CD8-positive, alpha-beta T cell (primary cell): ENCODE measurements at regions of chr17 and their contacts with region 1.

Region 1: GRCh38 chr17:35063514-35064223 is at the start of gene RFFL:
- DNase-seq: peak; percentile 62 to 97 (median 85)
- ATAC-seq: peak; percentile 98
- H3K4me3 ChIP-seq: peak within 1 kb of the TSS in 1 of 2 experiments; percentile 38
- H3K4me3 Mint-ChIP-seq: peak within 1 kb of the TSS; percentile 85
- H3K27ac ChIP-seq: peak within 1 kb of the TSS; percentile 63 to 73
- H3K27ac Mint-ChIP-seq: peak within 1 kb of the TSS; percentile 97
- H3K4me1 ChIP-seq: peaks cover 35% of the 10 kb centered on the region
- H3K4me1 Mint-ChIP-seq: peaks cover 66% of the 10 kb centered on the region
- H3K27me3 ChIP-seq: no peaks in the 10 kb centered on the region
- H3K27me3 Mint-ChIP-seq: no peaks in the 10 kb centered on the region
- CTCF ChIP-seq: no peak
- total RNA-seq, gene RFFL: 55.2 to 64.4 TPM

Region 2: GRCh38 chr17:34961093-34961911 is 102.4 kb before region 1 on chr17 and contains the starts of genes CCT6B and ZNF830:
- CTCF ChIA-PET with region 1: interaction called, 4 read pairs
- POLR2A ChIA-PET with region 1: no interaction called
- intact Hi-C with region 1: loop called in 1 of 2 experiments (anchors 1 kb)
- DNase-seq: peak; percentile 75 to 97 (median 92)
- ATAC-seq: peak; percentile 88
- H3K4me3 ChIP-seq: peak within 1 kb of the TSS; percentile 72 to 78
- H3K4me3 Mint-ChIP-seq: peak within 1 kb of the TSS; percentile 100
- H3K27ac ChIP-seq: peak within 1 kb of the TSS; percentile 84 to 99
- H3K27ac Mint-ChIP-seq: peak within 1 kb of the TSS; percentile 99
- H3K4me1 ChIP-seq: peaks cover 22% of the 10 kb centered on the region
- H3K4me1 Mint-ChIP-seq: peaks cover 40% of the 10 kb centered on the region
- H3K27me3 ChIP-seq: no peaks in the 10 kb centered on the region
- H3K27me3 Mint-ChIP-seq: peaks cover 6% of the 10 kb centered on the region
- CTCF ChIP-seq: no peak
- total RNA-seq, gene CCT6B: 4.0 to 5.9 TPM
- total RNA-seq, gene ZNF830: 43.6 to 45.0 TPM

Region 3: GRCh38 chr17:34990921-34991365 is 72.7 kb before region 1 on chr17:
- CTCF ChIA-PET with region 1: interaction called, 73 read pairs
- POLR2A ChIA-PET with region 1: interaction called, 3 read pairs
- intact Hi-C with region 1: no loop called
- DNase-seq: no peak
- ATAC-seq: no peak
- H3K4me3 ChIP-seq: no peak overlapping the region
- H3K4me3 Mint-ChIP-seq: no peak overlapping the region
- H3K27ac ChIP-seq: no peak overlapping the region
- H3K27ac Mint-ChIP-seq: no peak overlapping the region
- H3K4me1 ChIP-seq: no peaks in the 10 kb centered on the region
- H3K4me1 Mint-ChIP-seq: peaks cover 5% of the 10 kb centered on the region
- H3K27me3 ChIP-seq: no peaks in the 10 kb centered on the region
- H3K27me3 Mint-ChIP-seq: no peaks in the 10 kb centered on the region
- CTCF ChIP-seq: no peak

Region 4: DNA sequence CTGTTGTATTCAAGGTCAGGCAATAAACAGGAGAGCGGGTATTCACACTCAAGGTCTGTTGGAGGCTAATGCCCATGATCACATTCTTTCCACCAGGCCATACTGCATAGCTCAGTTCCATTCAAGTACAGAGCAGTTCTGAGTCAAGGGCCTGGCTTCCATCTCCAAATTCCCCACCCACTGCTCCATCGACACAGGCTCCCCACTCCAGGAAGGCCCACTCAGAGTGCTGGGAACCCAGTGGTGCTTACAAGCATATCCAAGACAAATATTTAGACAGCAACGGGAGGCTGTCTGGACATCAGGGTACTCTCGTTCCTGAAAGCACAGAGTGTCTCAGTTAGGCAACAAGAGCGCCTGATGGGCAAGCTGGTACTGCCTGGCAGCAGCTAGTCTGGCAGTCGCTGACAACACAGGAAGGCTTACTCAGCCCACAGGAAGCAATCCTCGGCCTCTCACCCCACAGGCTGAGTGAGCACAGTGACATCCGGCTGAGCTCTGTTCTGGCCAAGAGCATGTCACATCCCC is 41.1 kb before region 1 on chr17:
- CTCF ChIA-PET with region 1: interaction called, 8 read pairs
- POLR2A ChIA-PET with region 1: interaction called, 22 read pairs
- intact Hi-C with region 1: loop called (anchors 1 kb)
- DNase-seq: peak; percentile 43 to 88 (median 79)
- ATAC-seq: peak; percentile 96
- H3K4me3 ChIP-seq: no peak overlapping the region
- H3K4me3 Mint-ChIP-seq: peak overlapping the region; percentile 57
- H3K27ac ChIP-seq: peak overlapping the region; percentile 49 to 88
- H3K27ac Mint-ChIP-seq: peak overlapping the region; percentile 98
- H3K4me1 ChIP-seq: peaks cover 31% of the 10 kb centered on the region
- H3K4me1 Mint-ChIP-seq: peaks cover 58% of the 10 kb centered on the region
- H3K27me3 ChIP-seq: no peaks in the 10 kb centered on the region
- H3K27me3 Mint-ChIP-seq: no peaks in the 10 kb centered on the region
- CTCF ChIP-seq: no peak

Region 5: DNA sequence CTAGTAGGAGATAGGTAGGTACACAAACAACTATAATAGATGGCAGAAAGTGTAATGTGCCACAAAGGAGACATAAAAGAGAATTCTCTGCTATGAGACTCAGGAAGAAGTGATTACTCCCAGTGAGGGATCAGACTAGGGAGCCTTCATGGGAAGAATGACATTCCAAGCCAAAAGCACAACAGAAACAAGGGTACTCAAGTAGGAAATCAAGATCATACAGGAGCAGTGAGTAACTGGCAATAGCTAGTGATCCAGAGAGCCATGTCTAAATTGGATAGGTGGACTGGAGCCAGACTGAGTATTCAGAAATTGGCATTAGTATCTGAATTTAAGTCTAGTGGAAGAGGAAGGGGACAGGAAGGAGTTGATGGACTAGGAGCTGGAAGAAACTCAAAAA is 10.9 kb before region 1 on chr17:
- CTCF ChIA-PET with region 1: interaction called, 29 read pairs
- POLR2A ChIA-PET with region 1: interaction called, 11 read pairs
- intact Hi-C with region 1: loop called (anchors 1 kb)
- DNase-seq: no peak
- ATAC-seq: no peak
- H3K4me3 ChIP-seq: no peak overlapping the region
- H3K4me3 Mint-ChIP-seq: peak overlapping the region; percentile 59
- H3K27ac ChIP-seq: peak overlapping the region in 1 of 2 experiments; percentile 87
- H3K27ac Mint-ChIP-seq: peak overlapping the region; percentile 94
- H3K4me1 ChIP-seq: peaks cover 58% of the 10 kb centered on the region
- H3K4me1 Mint-ChIP-seq: peaks cover 78% of the 10 kb centered on the region
- H3K27me3 ChIP-seq: no peaks in the 10 kb centered on the region
- H3K27me3 Mint-ChIP-seq: no peaks in the 10 kb centered on the region
- CTCF ChIP-seq: no peak

Region 6: GRCh38 chr17:35312790-35313711 is 249.4 kb after region 1 on chr17:
- CTCF ChIA-PET with region 1: no interaction called
- POLR2A ChIA-PET with region 1: no interaction called
- intact Hi-C with region 1: no loop called
- DNase-seq: peak; percentile 77 to 99 (median 88)
- ATAC-seq: peak; percentile 92
- H3K4me3 ChIP-seq: peak overlapping the region; percentile 73 to 84
- H3K4me3 Mint-ChIP-seq: peak overlapping the region; percentile 97
- H3K27ac ChIP-seq: peak overlapping the region; percentile 75 to 86
- H3K27ac Mint-ChIP-seq: peak overlapping the region; percentile 98
- H3K4me1 ChIP-seq: peaks cover 26% of the 10 kb centered on the region
- H3K4me1 Mint-ChIP-seq: peaks cover 57% of the 10 kb centered on the region
- H3K27me3 ChIP-seq: no peaks in the 10 kb centered on the region
- H3K27me3 Mint-ChIP-seq: no peaks in the 10 kb centered on the region
- CTCF ChIP-seq: peak; percentile 88